Left cardiac atrium (tissue), 4 donors: ENCODE measurements at regions of chr11 and their contacts with region 1.

Region 1: DNA sequence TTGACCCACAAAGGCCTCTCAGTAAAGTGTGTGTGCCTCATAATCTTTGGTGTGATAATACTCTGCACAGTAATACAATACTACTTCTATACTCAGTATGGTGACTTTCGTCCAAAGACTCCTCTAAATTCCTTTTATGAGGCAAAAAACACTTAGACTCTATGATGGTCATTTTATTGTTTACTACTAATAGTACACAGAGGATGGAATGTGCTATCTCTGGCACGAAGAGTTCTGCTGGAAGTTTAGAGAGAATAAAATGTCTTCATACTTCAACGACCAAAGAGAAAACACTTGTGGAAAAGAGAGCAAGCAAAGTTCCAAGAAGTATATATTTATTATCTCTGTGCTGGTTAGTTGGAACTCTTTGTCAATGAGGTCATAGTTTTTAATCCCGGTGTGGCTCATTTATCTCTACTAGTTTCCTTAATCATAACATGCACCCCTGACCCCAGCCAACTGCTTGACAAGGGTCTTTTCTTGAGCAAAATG is 7.5 kb upstream of the CSTF3 start:
- DNase-seq: no peak
- ATAC-seq: peak in 1 of 2 donors; percentile 34

Region 2: DNA sequence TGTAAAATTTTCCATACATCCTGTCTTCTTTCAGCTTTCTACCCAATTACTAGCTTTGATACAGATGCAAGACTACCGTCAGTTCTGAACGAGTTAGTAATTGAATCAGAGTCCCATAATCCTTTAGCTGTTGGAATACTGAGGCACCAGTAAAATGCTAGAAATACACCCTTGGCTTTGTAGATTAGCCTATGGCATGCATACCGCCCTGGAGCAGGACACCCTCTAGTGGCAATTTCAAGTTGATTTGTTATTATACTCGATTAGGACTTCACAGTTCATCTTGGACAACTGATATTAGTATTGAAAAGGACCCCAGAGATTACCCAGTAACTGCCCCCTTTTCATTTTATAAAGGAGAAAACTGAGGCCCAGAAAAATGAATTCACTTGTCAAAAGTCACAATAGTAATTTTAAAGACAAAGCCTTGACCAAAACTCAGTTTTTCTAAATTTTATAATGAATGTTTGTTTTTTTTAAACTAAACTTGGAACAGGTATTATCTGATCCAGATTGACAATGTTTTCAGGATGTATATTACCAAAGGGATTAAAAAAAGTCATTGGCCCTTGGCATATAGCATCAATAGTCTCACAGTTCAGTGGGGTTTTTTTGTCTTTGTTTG is 161.1 kb after region 1 on chr11:
- intact Hi-C with region 1: loop called (anchors 5 kb)
- DNase-seq: no peak
- ATAC-seq: peak; percentile 64 to 67

Region 3: DNA sequence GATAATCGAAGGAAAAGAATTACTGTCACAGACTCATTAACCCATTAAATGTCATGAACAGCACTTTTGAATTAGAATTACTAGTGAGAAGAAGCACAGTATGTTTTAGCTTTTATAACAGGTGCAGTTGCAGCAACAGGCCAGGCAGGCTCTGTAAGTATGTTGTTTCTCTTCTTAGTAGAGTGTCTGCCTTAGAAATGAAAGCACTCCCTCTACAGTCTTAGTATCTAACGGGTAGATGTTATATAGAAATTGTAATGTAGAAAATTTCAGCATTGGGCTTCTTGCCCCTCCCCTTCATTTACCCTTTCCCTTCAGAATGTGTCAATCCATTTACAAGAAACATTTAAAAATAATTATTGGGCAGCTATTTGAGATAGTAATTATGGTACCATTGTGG is 175.9 kb after region 1 on chr11:
- intact Hi-C with region 1: loop called in 1 of 2 experiments (anchors 5 kb)
- DNase-seq: no peak
- ATAC-seq: peak; percentile 38 to 55